Activated naive CD4-positive, alpha-beta T cell treated with anti-CD3 and anti-CD28 coated beads for 36 hours (primary cell): ENCODE measurements at regions of chr7 and their contacts with region 1.

Region 1: DNA sequence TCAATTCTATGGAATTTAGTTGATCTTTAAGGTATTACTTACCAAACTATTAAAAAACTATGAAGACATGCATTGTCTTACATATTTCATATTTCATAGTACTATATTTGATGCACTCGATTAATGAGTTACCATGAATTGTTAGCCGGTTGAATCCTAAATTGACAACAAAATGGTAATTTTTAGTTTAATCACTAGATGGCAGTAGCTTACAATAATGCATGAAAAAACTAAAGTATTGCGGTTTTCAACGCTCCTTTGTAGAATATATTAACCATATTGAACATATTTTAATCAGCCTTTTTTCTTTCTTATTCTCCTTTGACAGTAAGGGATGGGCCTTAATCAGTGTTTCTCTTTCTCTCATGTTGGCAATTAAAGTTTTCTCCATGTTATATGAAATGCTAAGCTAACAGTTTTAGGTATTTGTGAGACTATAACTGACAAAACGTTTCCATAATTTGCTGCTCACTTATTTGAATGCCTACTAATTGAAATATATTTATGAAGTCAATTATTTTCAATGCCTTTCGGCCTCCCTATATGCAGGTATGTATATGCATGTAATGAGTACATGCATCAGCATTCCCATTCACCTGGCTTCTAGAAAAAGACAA is 48.5 kb upstream of the ARL4A start:
- DNase-seq: no peak
- H3K4me3 Mint-ChIP-seq: no peak overlapping the region
- H3K27ac Mint-ChIP-seq: no peak overlapping the region
- H3K4me1 Mint-ChIP-seq: peaks cover 19% of the 10 kb centered on the region
- H3K27me3 Mint-ChIP-seq: no peaks in the 10 kb centered on the region

Region 2: DNA sequence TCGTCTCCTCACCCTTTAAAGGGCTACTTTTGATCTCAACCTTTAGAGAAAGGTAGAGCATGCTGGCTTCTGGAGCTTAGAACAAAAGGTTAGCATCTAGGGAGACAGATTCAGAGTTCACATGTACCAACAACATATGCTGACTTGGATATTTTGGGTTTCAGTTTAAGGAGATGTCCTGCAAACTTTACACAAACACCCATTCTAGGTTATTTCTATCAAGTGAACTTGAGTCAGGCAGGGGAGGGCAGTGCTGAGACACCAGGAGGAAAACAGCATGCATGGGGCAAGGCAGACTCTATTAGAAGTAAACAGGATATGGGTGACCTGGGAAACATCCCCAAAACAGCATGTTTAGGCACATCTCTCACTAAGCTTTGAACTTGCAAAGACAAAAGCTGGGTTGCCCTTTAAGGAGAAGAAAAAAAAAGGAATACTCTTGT is 92.3 kb after region 1 on chr7:
- CTCF ChIA-PET with region 1: no interaction called
- intact Hi-C with region 1: loop called (anchors 5 kb)
- DNase-seq: peak; percentile 30
- H3K4me3 Mint-ChIP-seq: no peak overlapping the region
- H3K27ac Mint-ChIP-seq: no peak overlapping the region
- H3K4me1 Mint-ChIP-seq: peaks cover 13% of the 10 kb centered on the region
- H3K27me3 Mint-ChIP-seq: no peaks in the 10 kb centered on the region

Region 3: DNA sequence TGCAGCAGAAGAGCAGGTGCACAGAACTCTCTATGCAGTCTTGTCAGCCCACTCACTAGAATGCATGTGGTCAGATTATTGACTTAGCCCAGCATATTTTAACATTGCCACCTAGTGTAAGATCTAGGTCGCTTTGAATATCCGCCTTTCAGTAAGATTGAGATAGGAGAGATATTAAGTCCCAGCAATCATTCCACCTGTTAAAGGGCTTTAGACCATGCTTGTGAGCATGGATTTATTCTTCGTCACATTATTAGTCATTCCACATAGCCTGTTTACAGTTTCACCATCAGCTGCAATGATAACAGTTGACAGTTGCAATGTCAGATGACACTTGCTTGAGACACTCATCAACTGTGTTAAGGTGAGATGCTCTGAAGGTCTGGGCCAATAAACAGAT is 540.1 kb after region 1 on chr7:
- CTCF ChIA-PET with region 1: no interaction called
- intact Hi-C with region 1: loop called (anchors 1 kb)
- DNase-seq: no peak
- H3K4me3 Mint-ChIP-seq: no peak overlapping the region
- H3K27ac Mint-ChIP-seq: no peak overlapping the region
- H3K4me1 Mint-ChIP-seq: no peaks in the 10 kb centered on the region
- H3K27me3 Mint-ChIP-seq: peaks cover 19% of the 10 kb centered on the region

Region 4: GRCh38 chr7:13742811-13743210 is 1103.9 kb after region 1 on chr7:
- CTCF ChIA-PET with region 1: no interaction called
- intact Hi-C with region 1: loop called (anchors 2 kb)
- DNase-seq: peak; percentile 14
- H3K4me3 Mint-ChIP-seq: no peak overlapping the region
- H3K27ac Mint-ChIP-seq: no peak overlapping the region
- H3K4me1 Mint-ChIP-seq: no peaks in the 10 kb centered on the region
- H3K27me3 Mint-ChIP-seq: peaks cover 2% of the 10 kb centered on the region